ENCODE measurements at regions of chr1 and their contacts with region 1.

Region 1: DNA sequence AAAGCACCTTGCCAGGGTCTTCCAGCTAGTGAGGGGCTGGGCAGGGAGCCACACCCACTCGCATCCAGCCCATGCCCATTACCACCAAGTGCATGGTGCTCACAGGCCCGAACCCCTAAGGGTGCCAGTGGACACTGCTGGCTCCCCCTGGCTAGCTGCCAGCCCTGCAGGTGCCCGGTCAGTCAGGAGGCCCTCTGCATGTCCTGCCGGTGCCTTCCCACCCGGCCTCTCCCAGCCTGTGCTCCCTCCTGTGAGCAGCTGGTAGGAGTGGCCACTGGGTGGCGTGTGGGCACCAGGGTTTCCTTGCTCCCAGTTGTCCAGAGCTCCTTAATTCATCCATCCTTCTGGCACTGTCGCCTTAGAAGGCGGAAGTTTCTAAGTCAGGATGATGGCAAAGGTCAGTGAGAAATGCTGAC is 33.4 kb downstream of the QSOX1 start:
- DNase-seq: peak; percentile 81
- ATAC-seq: peak; percentile 88
- H3K4me3 Mint-ChIP-seq: no peak overlapping the region
- H3K27ac Mint-ChIP-seq: no peak overlapping the region
- H3K4me1 Mint-ChIP-seq: no peaks in the 10 kb centered on the region
- H3K27me3 Mint-ChIP-seq: no peaks in the 10 kb centered on the region
- CTCF ChIP-seq: peak; percentile 79

Region 2: DNA sequence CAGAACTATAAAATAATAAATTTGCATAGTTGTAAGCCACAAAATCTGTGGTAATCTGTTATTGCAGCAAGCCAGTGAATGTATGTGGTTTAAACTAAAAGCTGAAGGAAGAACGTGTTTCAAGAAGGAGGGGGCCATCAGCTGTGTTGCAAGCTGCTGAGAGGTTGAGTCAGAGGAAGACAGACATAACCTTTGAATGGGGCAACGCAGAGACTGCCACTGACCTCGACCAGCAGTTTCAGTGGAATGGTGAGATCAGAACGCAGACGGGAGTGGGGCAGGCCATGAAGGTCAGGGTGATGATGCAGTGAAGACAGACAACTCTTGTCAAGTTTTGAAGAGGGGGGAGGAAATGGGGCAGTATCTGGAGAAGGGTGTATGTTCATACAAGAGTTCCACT is 56.6 kb before region 1 on chr1:
- CTCF ChIA-PET with region 1: no interaction called
- POLR2A ChIA-PET with region 1: no interaction called
- DNase-seq: no peak
- ATAC-seq: no peak
- H3K4me3 Mint-ChIP-seq: no peak overlapping the region
- H3K27ac Mint-ChIP-seq: no peak overlapping the region
- H3K4me1 Mint-ChIP-seq: peaks cover 13% of the 10 kb centered on the region
- H3K27me3 Mint-ChIP-seq: no peaks in the 10 kb centered on the region; the same call in 1 of the 2 replicates
- CTCF ChIP-seq: no peak

Region 3: GRCh38 chr1:180198196-180198595 is 10.1 kb after region 1 on chr1:
- CTCF ChIA-PET with region 1: interaction called, 23 read pairs
- POLR2A ChIA-PET with region 1: interaction called, 3 read pairs
- DNase-seq: no peak
- ATAC-seq: peak; percentile 43
- H3K4me3 Mint-ChIP-seq: no peak overlapping the region
- H3K27ac Mint-ChIP-seq: no peak overlapping the region
- H3K4me1 Mint-ChIP-seq: peaks cover 3% of the 10 kb centered on the region; the same call in 1 of the 2 replicates
- H3K27me3 Mint-ChIP-seq: no peaks in the 10 kb centered on the region
- CTCF ChIP-seq: no peak

Region 4: GRCh38 chr1:180221462-180221861 is 33.4 kb after region 1 on chr1:
- CTCF ChIA-PET with region 1: interaction called, 15 read pairs
- POLR2A ChIA-PET with region 1: no interaction called
- DNase-seq: no peak
- ATAC-seq: no peak
- H3K4me3 Mint-ChIP-seq: no peak overlapping the region
- H3K27ac Mint-ChIP-seq: no peak overlapping the region
- H3K4me1 Mint-ChIP-seq: peaks cover 15% of the 10 kb centered on the region
- H3K27me3 Mint-ChIP-seq: peaks cover 22% of the 10 kb centered on the region
- CTCF ChIP-seq: no peak

Region 5: DNA sequence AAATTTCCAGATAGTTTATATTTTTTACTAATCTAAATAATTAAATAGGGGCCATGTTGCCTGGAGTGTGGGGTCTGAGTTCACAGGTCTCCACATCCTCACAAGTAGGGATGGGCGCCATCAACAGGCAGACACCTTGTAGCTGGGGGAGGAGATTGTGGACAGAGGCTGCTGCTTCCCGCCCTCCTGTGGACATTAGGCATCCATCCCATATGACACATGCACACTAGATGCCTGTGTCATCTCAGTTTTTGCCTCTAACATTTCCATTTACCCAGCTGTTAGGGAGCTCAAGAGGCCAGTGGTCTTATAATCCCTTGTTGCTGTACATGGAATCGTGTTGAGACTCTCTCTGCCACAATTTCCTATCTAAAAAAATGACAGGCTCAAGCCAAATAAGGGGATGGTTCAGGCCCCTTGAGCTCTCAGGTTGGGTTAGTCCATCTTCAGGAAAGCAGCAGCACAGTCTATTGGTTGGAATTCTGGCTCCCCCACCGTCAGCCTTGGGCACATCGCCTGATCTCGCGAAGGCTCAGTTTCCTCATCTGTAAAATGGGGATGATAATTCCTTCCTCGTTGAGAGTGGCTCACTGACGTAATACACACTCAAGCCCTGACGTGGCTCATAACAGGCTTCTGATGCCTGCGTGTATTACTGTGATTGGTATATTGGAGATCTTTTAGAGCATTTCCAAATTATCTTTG is 55.6 kb after region 1 on chr1:
- CTCF ChIA-PET with region 1: interaction called, 20 read pairs
- POLR2A ChIA-PET with region 1: no interaction called
- DNase-seq: no peak
- ATAC-seq: 0 out of 2 replicates have a peak, but pooled peaks have one; percentile 5
- H3K4me3 Mint-ChIP-seq: no peak overlapping the region
- H3K27ac Mint-ChIP-seq: no peak overlapping the region
- H3K4me1 Mint-ChIP-seq: peaks cover 80% of the 10 kb centered on the region
- H3K27me3 Mint-ChIP-seq: no peaks in the 10 kb centered on the region
- CTCF ChIP-seq: no peak

Region 6: GRCh38 chr1:180415985-180416633 is 228.0 kb after region 1 on chr1:
- CTCF ChIA-PET with region 1: interaction called, 23 read pairs
- POLR2A ChIA-PET with region 1: no interaction called
- DNase-seq: no peak
- ATAC-seq: no peak
- H3K4me3 Mint-ChIP-seq: no peak overlapping the region
- H3K27ac Mint-ChIP-seq: no peak overlapping the region
- H3K4me1 Mint-ChIP-seq: no peaks in the 10 kb centered on the region
- H3K27me3 Mint-ChIP-seq: no peaks in the 10 kb centered on the region
- CTCF ChIP-seq: peak; percentile 61; the same call in 1 of the 2 replicates

Measured in WTC11 (cell line).